ENCODE measurements at regions of chr12 and their contacts with region 1.

Region 1: GRCh38 chr12:9106610-9107541 is 8.8 kb downstream of the A2M start:
- DNase-seq: no peak
- H3K4me3 ChIP-seq: no peak overlapping the region
- H3K27ac ChIP-seq: no peak overlapping the region
- H3K4me1 ChIP-seq: peaks cover 0 to 7% (median 0%) of the 10 kb centered on the region in 4 donors
- H3K27me3 ChIP-seq: no peaks in the 10 kb centered on the region
- CTCF ChIP-seq: no peak

Region 2: GRCh38 chr12:8914716-8915526 is 192.0 kb before region 1 on chr12:
- intact Hi-C with region 1: no loop called
- DNase-seq: peak; percentile 41 to 78
- H3K4me3 ChIP-seq: peak overlapping the region; percentile 58 to 71
- H3K27ac ChIP-seq: peak overlapping the region; percentile 91 to 92
- H3K4me1 ChIP-seq: peaks cover 0 to 25% (median 19%) of the 10 kb centered on the region in 4 donors
- H3K27me3 ChIP-seq: no peaks in the 10 kb centered on the region
- CTCF ChIP-seq: no peak

Region 3: GRCh38 chr12:9073076-9073475 is 33.8 kb before region 1 on chr12:
- intact Hi-C with region 1: loop called (anchors 5 kb)
- DNase-seq: no peak
- H3K4me3 ChIP-seq: no peak overlapping the region
- H3K27ac ChIP-seq: peak overlapping the region in 1 of 2 donors; percentile 4
- H3K4me1 ChIP-seq: no peaks in the 10 kb centered on the region
- H3K27me3 ChIP-seq: no peaks in the 10 kb centered on the region
- CTCF ChIP-seq: no peak